CD8-positive, alpha-beta T cell (primary cell): ENCODE measurements at regions of chr12 and their contacts with region 1.

Region 1: DNA sequence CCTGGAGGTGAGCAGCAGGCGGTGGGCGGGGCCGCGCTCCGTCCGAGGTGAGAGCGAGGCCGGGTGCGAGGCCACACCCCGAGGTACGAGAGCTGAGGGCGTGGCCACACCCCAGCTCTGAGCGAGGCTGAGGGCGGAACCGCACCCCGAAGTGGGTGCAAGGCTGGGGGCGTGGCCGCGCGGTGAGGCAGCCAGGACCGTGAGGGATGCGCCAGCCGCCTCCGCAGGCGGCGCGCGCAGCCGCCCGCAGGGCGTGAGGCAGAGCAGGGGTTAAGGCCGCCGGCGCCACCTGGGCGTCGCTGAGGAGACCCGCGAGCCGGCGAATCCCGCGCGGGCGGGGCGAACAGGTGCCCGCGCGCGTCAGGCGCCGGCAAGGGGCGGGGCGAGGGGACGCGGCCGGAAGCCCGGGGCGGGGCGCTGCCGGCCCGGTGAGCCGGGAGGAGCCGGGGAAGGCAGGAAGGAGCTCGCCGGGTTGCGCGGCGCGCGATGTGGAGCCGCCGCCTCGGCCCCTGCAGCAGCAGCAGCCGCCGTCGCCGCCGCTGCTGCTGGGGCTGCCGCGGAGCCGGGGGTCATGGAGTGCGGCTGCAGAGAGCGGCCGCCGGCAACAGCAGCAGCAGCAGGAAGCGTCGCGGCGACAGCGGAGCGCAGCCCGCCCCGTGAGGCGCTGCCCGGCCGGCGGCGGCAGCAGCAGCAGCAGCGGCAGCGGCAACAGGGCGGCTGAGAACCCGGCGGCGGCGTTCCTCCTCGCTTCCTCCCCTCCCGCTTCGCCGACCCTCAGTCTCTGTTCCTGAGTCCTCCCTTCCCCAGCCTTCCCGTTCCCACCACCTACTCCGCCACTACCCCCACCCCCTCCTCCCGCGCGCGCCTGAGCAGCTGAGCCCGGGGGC is at the start of gene BICDL1:
- DNase-seq: peak; percentile 94 to 99 (median 97)
- ATAC-seq: peak; percentile 87
- H3K4me3 ChIP-seq: peak within 1 kb of the TSS; percentile 54 to 63
- H3K4me3 Mint-ChIP-seq: peak within 1 kb of the TSS; percentile 88
- H3K27ac ChIP-seq: peak within 1 kb of the TSS; percentile 58 to 82
- H3K27ac Mint-ChIP-seq: peak within 1 kb of the TSS; percentile 97
- H3K4me1 ChIP-seq: peaks cover 22% of the 10 kb centered on the region
- H3K4me1 Mint-ChIP-seq: peaks cover 35% of the 10 kb centered on the region
- H3K27me3 ChIP-seq: no peaks in the 10 kb centered on the region
- H3K27me3 Mint-ChIP-seq: no peaks in the 10 kb centered on the region
- CTCF ChIP-seq: peak; percentile 14
- total RNA-seq, gene BICDL1: 138 to 154 TPM

Region 2: DNA sequence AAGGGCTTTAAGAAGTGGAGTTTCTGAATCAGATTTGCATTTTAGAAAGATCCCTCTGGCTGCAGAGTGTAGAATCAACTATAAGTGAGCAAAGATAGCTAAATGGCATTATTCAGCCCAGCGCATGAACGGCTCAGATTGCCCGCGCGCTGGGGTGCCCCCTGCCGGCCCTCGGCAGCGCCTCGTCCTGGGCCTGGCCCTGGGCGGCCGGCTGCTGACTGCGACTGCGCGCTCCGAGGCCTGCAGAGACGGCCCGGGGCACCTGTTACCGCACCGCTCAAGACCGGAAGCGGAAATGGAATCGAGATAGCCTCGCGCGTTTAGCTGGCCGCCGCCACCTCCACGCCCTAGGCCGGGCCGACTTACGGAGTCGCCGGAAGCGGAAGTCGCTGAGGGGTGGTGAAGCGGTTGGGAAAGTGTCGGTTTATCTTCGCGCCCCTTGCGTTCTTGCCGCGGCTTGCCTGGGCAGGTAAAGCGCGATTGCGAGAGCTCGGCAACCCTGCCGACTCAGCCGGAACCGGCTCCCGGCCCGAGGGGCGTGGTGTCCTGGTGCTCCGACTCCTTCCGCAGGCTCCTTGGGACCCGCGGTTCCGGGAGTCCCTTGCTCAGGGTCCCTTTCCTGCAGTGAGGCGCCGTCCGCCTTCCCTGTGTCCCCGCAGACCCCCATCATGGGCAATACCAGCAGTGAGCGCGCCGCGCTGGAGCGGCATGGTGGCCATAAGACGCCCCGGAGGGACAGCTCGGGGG is 321.3 kb before region 1 on chr12 and contains the start of gene PRKAB1:
- CTCF ChIA-PET with region 1: no interaction called
- POLR2A ChIA-PET with region 1: no interaction called
- intact Hi-C with region 1: loop called (anchors 2 to 5 kb)
- DNase-seq: peak; percentile 89 to 99 (median 94)
- ATAC-seq: peak; percentile 90
- H3K4me3 ChIP-seq: peak within 1 kb of the TSS; percentile 96 to 97
- H3K4me3 Mint-ChIP-seq: peak within 1 kb of the TSS; percentile 87
- H3K27ac ChIP-seq: peak within 1 kb of the TSS; percentile 75 to 88
- H3K27ac Mint-ChIP-seq: peak within 1 kb of the TSS; percentile 90
- H3K4me1 ChIP-seq: peaks cover 36% of the 10 kb centered on the region
- H3K4me1 Mint-ChIP-seq: peaks cover 59% of the 10 kb centered on the region
- H3K27me3 ChIP-seq: no peaks in the 10 kb centered on the region
- H3K27me3 Mint-ChIP-seq: no peaks in the 10 kb centered on the region
- CTCF ChIP-seq: peak; percentile 94
- total RNA-seq, gene PRKAB1: 17.9 to 23.7 TPM

Region 3: DNA sequence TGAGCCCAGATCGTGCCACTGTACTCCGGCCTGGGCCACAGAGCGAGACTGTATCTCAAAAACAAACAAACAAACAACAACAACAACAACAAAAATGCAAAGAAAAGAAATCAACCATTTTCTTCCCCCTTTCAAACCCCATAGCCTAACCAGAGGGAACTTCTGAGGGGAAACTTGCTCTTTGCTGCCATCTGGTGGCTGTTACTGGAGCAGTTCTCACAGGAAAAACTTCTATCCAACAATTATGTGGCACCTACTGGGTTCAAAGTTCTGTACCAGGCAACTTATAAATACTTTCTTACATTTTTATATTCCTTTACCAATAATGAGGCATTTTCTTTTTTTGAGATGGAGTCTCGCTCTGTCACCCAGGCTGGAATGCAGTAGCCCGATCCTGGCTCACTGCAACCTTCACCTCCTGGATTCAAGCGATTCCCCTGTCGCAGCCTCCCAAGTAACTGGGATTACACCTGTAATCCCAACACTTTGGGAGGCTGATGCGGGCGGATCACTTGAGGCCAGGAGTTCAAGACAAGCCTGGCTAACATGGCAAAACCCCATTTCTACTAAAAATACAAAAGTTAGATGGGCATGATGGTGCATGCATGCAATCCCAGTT is 50.9 kb before region 1 on chr12:
- CTCF ChIA-PET with region 1: no interaction called
- POLR2A ChIA-PET with region 1: no interaction called
- intact Hi-C with region 1: loop called in 1 of 2 experiments (anchors 2 kb)
- DNase-seq: peak; percentile 46 to 82 (median 75)
- ATAC-seq: peak; percentile 78
- H3K4me3 ChIP-seq: no peak overlapping the region
- H3K4me3 Mint-ChIP-seq: no peak overlapping the region
- H3K27ac ChIP-seq: no peak overlapping the region
- H3K27ac Mint-ChIP-seq: no peak overlapping the region
- H3K4me1 ChIP-seq: no peaks in the 10 kb centered on the region
- H3K4me1 Mint-ChIP-seq: peaks cover 2% of the 10 kb centered on the region
- H3K27me3 ChIP-seq: no peaks in the 10 kb centered on the region
- H3K27me3 Mint-ChIP-seq: peaks cover 3% of the 10 kb centered on the region
- CTCF ChIP-seq: peak; percentile 75

Region 4: GRCh38 chr12:120041386-120042231 is 52.6 kb after region 1 on chr12:
- CTCF ChIA-PET with region 1: no interaction called
- POLR2A ChIA-PET with region 1: no interaction called
- intact Hi-C with region 1: loop called in 1 of 2 experiments (anchors 10 kb)
- DNase-seq: peak in 8 of 9 experiments; percentile 4 to 72 (median 42)
- ATAC-seq: peak; percentile 87
- H3K4me3 ChIP-seq: no peak overlapping the region
- H3K4me3 Mint-ChIP-seq: peak overlapping the region; percentile 30
- H3K27ac ChIP-seq: peak overlapping the region in 1 of 2 experiments; percentile 4
- H3K27ac Mint-ChIP-seq: peak overlapping the region; percentile 93
- H3K4me1 ChIP-seq: no peaks in the 10 kb centered on the region
- H3K4me1 Mint-ChIP-seq: peaks cover 26% of the 10 kb centered on the region
- H3K27me3 ChIP-seq: no peaks in the 10 kb centered on the region
- H3K27me3 Mint-ChIP-seq: no peaks in the 10 kb centered on the region
- CTCF ChIP-seq: no peak

Region 5: GRCh38 chr12:120116792-120117651 is 128.0 kb after region 1 on chr12:
- CTCF ChIA-PET with region 1: interaction called, 5 read pairs
- POLR2A ChIA-PET with region 1: interaction called, 8 read pairs
- intact Hi-C with region 1: loop called (anchors 1 to 2 kb)
- DNase-seq: peak; percentile 95 to 99 (median 97)
- ATAC-seq: peak; percentile 84
- H3K4me3 ChIP-seq: peak overlapping the region; percentile 87 to 90
- H3K4me3 Mint-ChIP-seq: peak overlapping the region; percentile 84
- H3K27ac ChIP-seq: peak overlapping the region; percentile 91 to 95
- H3K27ac Mint-ChIP-seq: peak overlapping the region; percentile 88
- H3K4me1 ChIP-seq: peaks cover 53% of the 10 kb centered on the region
- H3K4me1 Mint-ChIP-seq: peaks cover 73% of the 10 kb centered on the region
- H3K27me3 ChIP-seq: no peaks in the 10 kb centered on the region
- H3K27me3 Mint-ChIP-seq: no peaks in the 10 kb centered on the region
- CTCF ChIP-seq: no peak